IMR-90 (cell line): ENCODE measurements at regions of chr1 and their contacts with region 1.

Region 1: GRCh38 chr1:114979278-114979891 is 50.2 kb upstream of the TSHB start:
- DNase-seq: peak; percentile 52
- ATAC-seq: peak; percentile 65; the same call in 1 of the 2 replicates
- H3K4me3 ChIP-seq: no peak overlapping the region
- H3K27ac ChIP-seq: no peak overlapping the region
- H3K4me1 ChIP-seq: no peaks in the 10 kb centered on the region
- H3K27me3 ChIP-seq: no peaks in the 10 kb centered on the region; the same call in 1 of the 2 replicates
- CTCF ChIP-seq: peak; percentile 73
- POLR2A ChIP-seq: no peak
- RAD21 ChIP-seq: peak; percentile 74

Region 2: DNA sequence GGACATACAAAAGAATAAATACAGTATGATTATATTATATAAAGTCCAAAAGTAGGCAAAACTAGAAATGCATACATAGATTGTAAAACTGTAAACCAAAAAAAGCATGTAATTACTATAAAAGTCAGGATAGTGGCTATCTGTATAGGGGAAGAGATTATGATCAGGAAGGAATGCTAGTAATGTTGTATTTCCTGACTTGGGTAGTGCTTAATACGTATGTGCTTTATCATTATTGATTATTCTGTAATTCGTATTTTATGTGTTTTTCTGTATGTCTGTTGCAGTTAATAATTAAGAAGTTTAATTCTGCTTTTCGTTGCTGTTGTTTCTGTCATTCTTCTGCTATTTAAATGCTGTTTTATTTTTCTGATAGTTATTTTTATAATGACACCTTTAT is 439.2 kb before region 1 on chr1:
- CTCF ChIA-PET with region 1: no interaction called
- POLR2A ChIA-PET with region 1: no interaction called
- dilution Hi-C with region 1: no loop called
- in situ Hi-C with region 1: no loop called
- intact Hi-C with region 1: no loop called
- DNase-seq: no peak
- ATAC-seq: no peak
- H3K4me3 ChIP-seq: no peak overlapping the region
- H3K27ac ChIP-seq: no peak overlapping the region
- H3K4me1 ChIP-seq: no peaks in the 10 kb centered on the region
- H3K27me3 ChIP-seq: peaks cover 3% of the 10 kb centered on the region; the same call in 1 of the 2 replicates
- CTCF ChIP-seq: no peak
- POLR2A ChIP-seq: no peak
- RAD21 ChIP-seq: no peak

Region 3: DNA sequence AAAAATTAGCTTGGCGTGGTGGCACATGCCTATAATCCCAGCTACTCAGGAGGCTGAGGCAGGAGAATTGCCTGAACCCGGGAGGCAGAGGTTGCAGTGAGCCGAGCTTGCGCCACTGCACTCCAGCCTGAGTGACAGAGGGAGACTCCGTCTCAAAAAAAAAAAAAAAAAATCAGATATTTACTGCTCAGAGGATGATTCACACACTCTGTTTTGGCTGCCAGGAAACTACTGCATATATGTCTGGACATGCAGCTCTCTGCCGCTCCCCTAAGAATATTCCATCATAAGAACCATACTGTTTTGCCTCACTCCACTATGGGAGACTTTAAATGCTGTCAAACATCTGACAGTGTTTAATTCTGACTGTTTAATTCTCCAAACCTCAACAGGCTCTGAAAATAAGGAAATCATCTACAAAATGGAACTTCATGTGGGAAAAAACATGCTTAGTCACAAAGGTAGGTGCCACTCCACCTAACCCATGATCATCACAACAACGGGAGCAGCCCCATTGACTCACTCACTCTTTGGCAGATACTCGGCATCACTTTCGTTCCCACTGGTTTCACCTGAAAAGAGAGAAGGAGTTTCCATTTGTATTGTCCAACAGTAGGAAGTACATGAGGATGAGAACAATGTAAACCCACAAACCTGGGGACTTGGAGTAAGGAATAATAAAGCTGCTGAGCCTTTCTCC is 368.7 kb before region 1 on chr1:
- CTCF ChIA-PET with region 1: no interaction called
- POLR2A ChIA-PET with region 1: no interaction called
- dilution Hi-C with region 1: no loop called
- in situ Hi-C with region 1: no loop called
- intact Hi-C with region 1: no loop called
- DNase-seq: peak; percentile 58
- ATAC-seq: peak; percentile 72
- H3K4me3 ChIP-seq: no peak overlapping the region
- H3K27ac ChIP-seq: no peak overlapping the region
- H3K4me1 ChIP-seq: no peaks in the 10 kb centered on the region
- H3K27me3 ChIP-seq: no peaks in the 10 kb centered on the region
- CTCF ChIP-seq: no peak
- POLR2A ChIP-seq: no peak
- RAD21 ChIP-seq: no peak

Region 4: DNA sequence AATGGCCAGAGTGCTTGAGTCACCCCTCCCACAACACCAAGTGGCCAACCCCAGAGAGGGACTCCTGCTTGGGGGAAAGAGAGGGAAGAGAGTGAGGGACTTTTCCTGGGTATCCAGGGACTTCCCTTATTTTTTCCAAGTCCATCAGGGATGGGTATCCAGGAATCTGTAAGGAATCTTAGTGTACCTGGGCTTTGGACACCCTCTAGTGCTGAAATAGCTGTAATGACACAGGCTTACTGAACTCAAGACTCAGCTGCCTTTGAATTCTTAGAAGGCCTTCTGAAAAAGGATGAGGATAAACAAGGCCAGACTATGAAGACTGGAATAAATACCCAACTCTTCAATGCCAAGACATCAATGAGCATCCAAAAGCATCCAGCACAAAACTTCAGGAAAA is 62.3 kb after region 1 on chr1:
- CTCF ChIA-PET with region 1: no interaction called
- POLR2A ChIA-PET with region 1: no interaction called
- dilution Hi-C with region 1: no loop called
- in situ Hi-C with region 1: no loop called
- intact Hi-C with region 1: loop called (anchors 2 kb)
- DNase-seq: no peak
- ATAC-seq: 0 out of 2 replicates have a peak, but pooled peaks have one; percentile 27
- H3K4me3 ChIP-seq: no peak overlapping the region
- H3K27ac ChIP-seq: no peak overlapping the region
- H3K4me1 ChIP-seq: peaks cover 1% of the 10 kb centered on the region; the same call in 1 of the 2 replicates
- H3K27me3 ChIP-seq: no peaks in the 10 kb centered on the region; the same call in 1 of the 2 replicates
- CTCF ChIP-seq: peak; percentile 23; the same call in 1 of the 2 replicates
- POLR2A ChIP-seq: no peak
- RAD21 ChIP-seq: no peak; the same call in 1 of the 2 replicates

Region 5: GRCh38 chr1:115112496-115113375 is 133.4 kb after region 1 on chr1:
- CTCF ChIA-PET with region 1: interaction called, 6 read pairs
- POLR2A ChIA-PET with region 1: interaction called, 3 read pairs
- dilution Hi-C with region 1: no loop called
- in situ Hi-C with region 1: loop called (anchors 5 kb)
- intact Hi-C with region 1: loop called (anchors 1 kb)
- DNase-seq: no peak
- ATAC-seq: peak; percentile 64
- H3K4me3 ChIP-seq: no peak overlapping the region
- H3K27ac ChIP-seq: no peak overlapping the region
- H3K4me1 ChIP-seq: peaks cover 8% of the 10 kb centered on the region
- H3K27me3 ChIP-seq: no peaks in the 10 kb centered on the region
- CTCF ChIP-seq: peak; percentile 87
- POLR2A ChIP-seq: no peak
- RAD21 ChIP-seq: peak; percentile 85